H1 (cell line): ENCODE measurements at regions of chr22 and their contacts with region 1.

Region 1: GRCh38 chr22:40436505-40437451 is 66.4 kb downstream of the SGSM3 start:
- DNase-seq: no peak
- H3K4me3 ChIP-seq: no peak overlapping the region
- H3K27ac ChIP-seq: no peak overlapping the region
- H3K4me1 ChIP-seq: no peaks in the 10 kb centered on the region; a peak in 1 of 7 replicates
- H3K27me3 ChIP-seq: no peaks in the 10 kb centered on the region
- CTCF ChIP-seq: peak in 2 of 3 experiments; percentile 41 to 44; a peak in 2 of 4 replicates
- EP300 ChIP-seq: no peak
- POLR2A ChIP-seq: no peak
- RAD21 ChIP-seq: peak; percentile 67 to 69

Region 2: DNA sequence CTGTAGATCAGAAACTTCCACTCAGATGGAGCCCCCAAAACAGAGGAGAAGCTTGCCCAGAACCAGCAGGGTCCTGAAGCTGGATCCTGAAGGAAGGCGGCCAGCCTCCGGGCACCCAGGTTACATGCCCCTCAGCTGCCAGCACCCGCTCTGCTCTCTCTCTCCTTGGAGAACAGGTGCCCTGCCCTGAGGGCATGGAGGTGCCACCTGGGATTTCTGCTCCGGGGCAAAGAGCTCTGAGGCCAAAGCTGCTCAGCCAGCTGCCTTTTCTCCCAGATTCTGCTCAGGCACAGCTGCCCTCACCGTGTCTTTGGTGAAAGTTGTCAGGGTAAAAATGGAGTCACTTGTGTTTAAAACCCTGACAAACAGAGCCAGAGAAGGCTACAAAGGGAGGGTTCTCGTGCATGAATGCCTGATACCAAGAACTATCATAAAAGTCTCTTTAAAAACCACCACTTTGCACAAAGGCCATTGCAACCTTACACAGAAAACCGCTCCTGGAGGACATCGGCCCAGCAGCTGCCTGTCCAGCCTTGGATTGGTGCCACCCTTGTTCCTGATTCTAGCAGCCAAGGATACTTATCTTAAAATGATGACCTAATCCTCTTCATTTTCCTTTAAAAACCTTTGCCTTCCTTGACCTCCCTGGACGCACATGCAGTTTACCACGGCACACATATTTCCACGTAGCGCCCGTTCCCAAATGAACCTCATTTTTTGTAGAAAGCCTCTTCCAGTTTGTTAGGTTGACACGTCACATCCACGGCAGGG is 726.2 kb before region 1 on chr22:
- CTCF ChIA-PET with region 1: no interaction called
- POLR2A ChIA-PET with region 1: no interaction called
- DNase-seq: no peak
- H3K4me3 ChIP-seq: no peak overlapping the region
- H3K27ac ChIP-seq: no peak overlapping the region
- H3K4me1 ChIP-seq: peaks cover 0 to 10% (median 4%) of the 10 kb centered on the region in 4 experiments; a peak in 6 of 7 replicates
- H3K27me3 ChIP-seq: no peaks in the 10 kb centered on the region; a peak in 1 of 7 replicates
- CTCF ChIP-seq: no peak
- EP300 ChIP-seq: no peak
- POLR2A ChIP-seq: no peak
- RAD21 ChIP-seq: no peak

Region 3: GRCh38 chr22:40332319-40332781 is 104.4 kb before region 1 on chr22:
- CTCF ChIA-PET with region 1: no interaction called
- POLR2A ChIA-PET with region 1: no interaction called
- DNase-seq: no peak
- H3K4me3 ChIP-seq: no peak overlapping the region
- H3K27ac ChIP-seq: no peak overlapping the region; the same call in 1 of the 2 replicates
- H3K4me1 ChIP-seq: peaks cover 2 to 19% (median 14%) of the 10 kb centered on the region in 4 experiments; a peak in 6 of 7 replicates
- H3K27me3 ChIP-seq: no peaks in the 10 kb centered on the region
- CTCF ChIP-seq: no peak
- EP300 ChIP-seq: no peak
- POLR2A ChIP-seq: no peak
- RAD21 ChIP-seq: no peak

Region 4: DNA sequence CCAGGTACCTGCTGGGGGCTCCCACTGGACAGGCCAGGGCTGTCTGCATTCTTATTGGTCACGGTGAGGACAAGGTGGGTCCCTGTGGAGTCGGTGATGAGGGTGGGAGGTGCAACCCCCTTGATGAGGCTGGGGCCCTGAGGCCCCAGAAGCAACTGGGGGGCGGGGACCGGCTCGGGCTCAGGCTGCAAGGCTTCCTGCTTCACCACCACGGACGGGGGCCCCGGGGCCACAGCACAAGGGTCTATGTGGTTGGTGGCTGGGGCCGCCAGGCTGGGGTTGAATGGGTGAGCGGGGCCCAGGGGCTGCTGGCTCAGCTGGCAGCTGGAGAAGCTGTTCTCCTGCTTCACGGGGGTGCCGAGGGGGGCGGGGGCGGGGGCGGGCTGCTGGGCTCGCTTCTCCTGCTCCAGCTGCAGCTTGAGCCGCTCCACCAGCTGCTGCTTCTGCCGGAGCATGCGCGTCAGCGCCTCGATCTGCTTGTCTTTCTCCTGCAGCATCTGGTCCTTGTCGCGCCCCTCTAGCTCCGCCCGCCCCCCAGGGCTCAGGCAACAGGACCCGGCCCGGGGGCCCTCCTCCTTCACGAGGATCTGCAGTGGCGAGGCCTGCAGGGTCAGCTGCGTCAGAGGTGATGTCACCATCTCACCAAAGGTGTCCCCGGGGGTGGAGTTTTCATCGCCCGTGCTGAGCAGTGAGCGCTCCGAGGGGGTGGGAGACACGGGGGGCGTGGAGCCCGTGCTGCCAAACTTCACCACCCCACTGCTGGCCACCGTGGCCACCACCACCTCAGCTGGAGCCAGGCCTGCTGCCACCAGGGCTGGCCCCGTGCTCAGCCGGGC is 18.2 kb before region 1 on chr22:
- CTCF ChIA-PET with region 1: interaction called, 57 read pairs
- POLR2A ChIA-PET with region 1: interaction called, 3 read pairs
- DNase-seq: peak in 1 of 2 experiments; percentile 42
- H3K4me3 ChIP-seq: no peak overlapping the region
- H3K27ac ChIP-seq: no peak overlapping the region
- H3K4me1 ChIP-seq: no peaks in the 10 kb centered on the region; a peak in 1 of 7 replicates
- H3K27me3 ChIP-seq: no peaks in the 10 kb centered on the region
- CTCF ChIP-seq: no peak
- EP300 ChIP-seq: no peak
- POLR2A ChIP-seq: no peak
- RAD21 ChIP-seq: no peak

Region 5: DNA sequence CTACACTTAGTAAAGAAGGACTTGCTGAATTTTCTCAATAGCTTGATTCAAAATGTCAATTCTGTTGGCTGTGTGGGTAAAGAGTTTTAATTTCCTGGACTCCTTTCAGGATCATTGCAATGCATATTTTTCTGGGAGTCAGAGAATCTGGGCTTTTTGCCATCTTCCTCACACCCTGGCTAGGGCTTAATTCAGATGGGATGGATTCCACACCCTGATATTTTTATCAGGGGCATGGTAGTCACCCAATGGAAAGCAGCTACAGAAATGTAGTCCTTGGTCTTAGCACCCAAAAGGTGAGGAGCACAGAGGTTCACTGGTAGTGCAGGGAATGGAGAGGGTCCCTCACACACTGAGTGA is 12.9 kb after region 1 on chr22:
- CTCF ChIA-PET with region 1: interaction called, 52 read pairs
- POLR2A ChIA-PET with region 1: interaction called, 3 read pairs
- DNase-seq: no peak
- H3K4me3 ChIP-seq: no peak overlapping the region
- H3K27ac ChIP-seq: no peak overlapping the region
- H3K4me1 ChIP-seq: peaks cover 0 to 12% (median under 1%) of the 10 kb centered on the region in 4 experiments; a peak in 3 of 7 replicates
- H3K27me3 ChIP-seq: no peaks in the 10 kb centered on the region
- CTCF ChIP-seq: no peak
- EP300 ChIP-seq: no peak
- POLR2A ChIP-seq: no peak
- RAD21 ChIP-seq: no peak

Region 6: GRCh38 chr22:40479126-40479800 is 42.5 kb after region 1 on chr22:
- CTCF ChIA-PET with region 1: interaction called, 69 read pairs
- POLR2A ChIA-PET with region 1: no interaction called
- DNase-seq: peak in 1 of 2 experiments; percentile 39
- H3K4me3 ChIP-seq: no peak overlapping the region
- H3K27ac ChIP-seq: no peak overlapping the region
- H3K4me1 ChIP-seq: peaks cover 0 to 6% (median 2%) of the 10 kb centered on the region in 4 experiments; a peak in 2 of 7 replicates
- H3K27me3 ChIP-seq: no peaks in the 10 kb centered on the region
- CTCF ChIP-seq: no peak
- EP300 ChIP-seq: no peak
- POLR2A ChIP-seq: no peak
- RAD21 ChIP-seq: no peak

Region 7: GRCh38 chr22:40525249-40525884 is 88.6 kb after region 1 on chr22:
- CTCF ChIA-PET with region 1: interaction called, 16 read pairs
- POLR2A ChIA-PET with region 1: interaction called, 5 read pairs
- DNase-seq: peak in 1 of 2 experiments; percentile 71
- H3K4me3 ChIP-seq: no peak overlapping the region
- H3K27ac ChIP-seq: no peak overlapping the region
- H3K4me1 ChIP-seq: no peaks in the 10 kb centered on the region
- H3K27me3 ChIP-seq: no peaks in the 10 kb centered on the region
- CTCF ChIP-seq: peak; percentile 57 to 68 (median 67)
- EP300 ChIP-seq: no peak
- POLR2A ChIP-seq: no peak
- RAD21 ChIP-seq: peak; percentile 50 to 62

Region 8: DNA sequence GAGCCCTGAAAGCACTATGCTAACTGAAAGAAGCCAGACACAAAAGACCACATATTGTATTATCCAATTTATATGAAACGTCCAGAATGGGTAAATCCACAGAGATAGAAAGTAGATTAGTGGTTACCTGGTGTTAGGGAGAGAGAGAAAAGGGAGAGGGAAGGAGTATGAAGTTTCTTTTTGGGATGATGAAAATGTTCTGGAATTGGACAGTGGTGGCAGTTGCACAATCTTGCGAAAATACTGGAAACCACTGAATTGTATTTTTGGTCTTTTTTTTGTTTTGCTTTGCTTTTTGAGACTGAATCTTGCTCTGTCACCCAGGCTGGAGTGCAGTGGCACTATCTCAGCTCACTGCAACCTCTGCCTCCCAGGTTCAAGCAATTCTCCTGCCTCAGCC is 136.2 kb after region 1 on chr22:
- CTCF ChIA-PET with region 1: no interaction called
- POLR2A ChIA-PET with region 1: no interaction called
- DNase-seq: no peak
- H3K4me3 ChIP-seq: no peak overlapping the region
- H3K27ac ChIP-seq: no peak overlapping the region
- H3K4me1 ChIP-seq: no peaks in the 10 kb centered on the region
- H3K27me3 ChIP-seq: no peaks in the 10 kb centered on the region
- CTCF ChIP-seq: no peak
- EP300 ChIP-seq: no peak
- POLR2A ChIP-seq: no peak
- RAD21 ChIP-seq: no peak

Region 9: GRCh38 chr22:40641269-40641668 is 204.5 kb after region 1 on chr22:
- CTCF ChIA-PET with region 1: interaction called, 51 read pairs
- POLR2A ChIA-PET with region 1: interaction called, 3 read pairs
- DNase-seq: no peak
- H3K4me3 ChIP-seq: no peak overlapping the region
- H3K27ac ChIP-seq: no peak overlapping the region
- H3K4me1 ChIP-seq: peaks cover 0 to 3% (median 2%) of the 10 kb centered on the region in 4 experiments; a peak in 4 of 7 replicates
- H3K27me3 ChIP-seq: no peaks in the 10 kb centered on the region
- CTCF ChIP-seq: no peak
- EP300 ChIP-seq: no peak
- POLR2A ChIP-seq: no peak
- RAD21 ChIP-seq: no peak